CD4-positive, alpha-beta memory T cell (primary cell): ENCODE measurements at regions of chr1 and their contacts with region 1.

Region 1: DNA sequence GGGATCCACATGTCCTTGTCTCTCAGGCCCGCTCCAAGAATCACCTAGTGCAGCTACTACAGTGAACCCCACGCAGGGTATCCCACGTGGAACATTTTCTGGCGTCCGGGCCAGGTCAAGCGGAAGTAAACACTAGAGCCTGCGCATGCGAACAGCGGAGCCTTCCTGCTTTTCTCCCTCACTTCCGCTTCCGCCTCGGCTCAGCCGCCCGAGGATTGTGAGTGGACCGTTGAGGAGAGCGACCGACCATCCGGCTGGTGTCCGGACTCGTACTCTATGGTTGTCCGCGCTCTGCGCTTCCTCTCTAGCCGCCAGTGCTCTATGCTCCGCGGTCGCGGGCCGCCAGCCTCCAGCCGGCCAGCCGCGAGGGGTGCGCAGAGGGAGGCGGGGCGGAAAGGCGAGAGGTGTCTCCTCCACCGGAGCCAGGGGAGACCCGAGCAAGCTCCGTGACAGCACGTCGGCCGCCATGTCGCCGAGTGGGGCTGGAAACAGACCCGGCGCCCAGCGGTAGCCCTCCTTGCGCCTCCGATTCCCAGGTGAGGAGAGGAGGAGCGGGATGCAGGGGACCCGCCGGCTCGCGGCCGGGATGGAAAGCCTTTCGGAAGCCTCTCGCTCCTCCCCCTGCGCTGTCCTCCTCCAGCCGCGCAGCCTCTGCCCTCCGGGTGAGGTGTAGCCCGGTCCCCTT is at the starts of genes CNST and TFB2M:
- DNase-seq: peak; percentile 89 to 93 (median 91)
- H3K4me3 ChIP-seq: peak within 1 kb of the TSS; percentile 84 to 99
- H3K4me3 Mint-ChIP-seq: peak within 1 kb of the TSS; percentile 97 to 99 (median 98)
- H3K27ac ChIP-seq: peak within 1 kb of the TSS; percentile 92
- H3K27ac Mint-ChIP-seq: peak within 1 kb of the TSS; percentile 89 to 99 (median 97)
- H3K4me1 ChIP-seq: peaks cover 61% of the 10 kb centered on the region
- H3K4me1 Mint-ChIP-seq: peaks cover 29 to 68% (median 46%) of the 10 kb centered on the region in 4 donors
- H3K27me3 ChIP-seq: no peaks in the 10 kb centered on the region
- H3K27me3 Mint-ChIP-seq: no peaks in the 10 kb centered on the region
- total RNA-seq, gene CNST: 97.8 to 103 TPM
- total RNA-seq, gene TFB2M: 8.8 to 9.6 TPM

Region 2: DNA sequence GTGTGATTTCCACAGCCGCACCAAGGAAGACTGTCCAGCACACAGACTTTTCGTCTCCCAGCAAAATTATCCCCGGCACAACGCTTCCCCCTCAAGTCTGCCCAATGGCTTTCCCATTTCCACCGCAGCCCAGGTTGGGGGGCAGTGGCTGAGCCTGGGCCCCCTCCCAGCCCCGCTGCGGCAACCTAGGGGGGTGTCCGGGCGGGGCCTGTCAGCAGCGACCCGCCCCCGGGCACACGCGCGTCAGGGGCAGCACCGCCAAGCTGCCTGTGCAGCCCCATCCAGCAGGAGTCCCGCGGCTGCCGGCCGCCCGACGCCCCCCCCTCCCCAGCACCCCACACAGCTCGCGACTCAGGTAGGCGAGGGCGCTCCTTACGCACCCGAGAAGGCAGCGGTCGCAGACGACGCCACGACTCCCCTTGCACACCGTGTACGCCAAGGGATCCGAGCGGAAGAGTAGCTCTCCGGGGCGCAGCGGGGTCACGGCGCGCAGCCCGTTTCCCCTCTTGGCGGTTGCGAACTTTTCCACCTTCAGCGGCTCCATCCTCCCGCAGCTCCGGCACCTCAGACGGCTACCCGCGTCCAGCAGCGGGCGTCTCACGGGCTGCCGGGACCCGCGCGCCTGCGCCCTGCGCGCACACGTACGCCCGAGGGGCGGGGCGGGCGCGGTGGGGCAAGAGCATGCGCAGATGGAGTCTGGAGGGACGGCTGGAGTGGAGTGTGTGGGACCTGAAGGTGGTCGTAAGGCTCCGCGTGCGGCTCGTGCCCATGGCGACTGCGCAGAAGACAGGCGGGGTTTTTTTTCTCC is 59.4 kb before region 1 on chr1 and contains the start of gene SMYD3:
- CTCF ChIA-PET with region 1: no interaction called
- POLR2A ChIA-PET with region 1: interaction called, 16 read pairs
- intact Hi-C with region 1: loop called (anchors 1 kb)
- DNase-seq: peak; percentile 74 to 82 (median 77)
- H3K4me3 ChIP-seq: peak within 1 kb of the TSS; percentile 70 to 74
- H3K4me3 Mint-ChIP-seq: peak within 1 kb of the TSS; percentile 86 to 98 (median 95)
- H3K27ac ChIP-seq: peak within 1 kb of the TSS; percentile 48
- H3K27ac Mint-ChIP-seq: peak within 1 kb of the TSS; percentile 69 to 96 (median 93)
- H3K4me1 ChIP-seq: peaks cover 14% of the 10 kb centered on the region
- H3K4me1 Mint-ChIP-seq: peaks cover 20 to 40% (median 29%) of the 10 kb centered on the region in 4 donors
- H3K27me3 ChIP-seq: no peaks in the 10 kb centered on the region
- H3K27me3 Mint-ChIP-seq: no peaks in the 10 kb centered on the region
- total RNA-seq, gene SMYD3: 19.5 to 19.7 TPM

Region 3: GRCh38 chr1:246579818-246580217 is 13.5 kb after region 1 on chr1:
- CTCF ChIA-PET with region 1: interaction called, 3 read pairs
- POLR2A ChIA-PET with region 1: interaction called, 16 read pairs
- intact Hi-C with region 1: loop called (anchors 1 kb)
- DNase-seq: no peak
- H3K4me3 ChIP-seq: no peak overlapping the region
- H3K4me3 Mint-ChIP-seq: peak overlapping the region in 2 of 8 donors; percentile 4 to 16
- H3K27ac ChIP-seq: no peak overlapping the region
- H3K27ac Mint-ChIP-seq: peak overlapping the region in 2 of 7 donors; percentile 42 to 69
- H3K4me1 ChIP-seq: peaks cover 80% of the 10 kb centered on the region
- H3K4me1 Mint-ChIP-seq: peaks cover 51 to 90% (median 69%) of the 10 kb centered on the region in 4 donors
- H3K27me3 ChIP-seq: no peaks in the 10 kb centered on the region
- H3K27me3 Mint-ChIP-seq: no peaks in the 10 kb centered on the region

Region 4: DNA sequence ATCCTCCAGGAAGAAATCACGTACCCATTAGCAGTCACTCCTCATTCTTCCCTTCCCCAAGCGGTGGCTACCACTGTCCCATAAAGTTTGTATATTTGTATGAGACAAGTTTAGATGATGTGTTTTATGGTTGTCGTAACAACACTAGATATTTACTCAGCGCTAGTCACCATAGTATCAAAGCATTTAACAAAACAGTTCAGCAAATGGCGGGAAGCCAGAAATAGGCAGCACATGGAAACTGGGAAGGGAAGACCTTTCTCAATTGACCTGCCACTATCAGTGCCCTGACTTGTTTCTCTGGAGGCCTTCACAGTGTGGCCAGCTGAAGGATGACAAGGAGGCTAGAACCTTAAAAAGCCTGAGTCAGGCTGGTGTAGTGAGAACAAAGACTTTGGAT is 31.1 kb after region 1 on chr1:
- CTCF ChIA-PET with region 1: interaction called, 4 read pairs
- POLR2A ChIA-PET with region 1: interaction called, 19 read pairs
- intact Hi-C with region 1: loop called (anchors 1 kb)
- DNase-seq: no peak
- H3K4me3 ChIP-seq: no peak overlapping the region
- H3K4me3 Mint-ChIP-seq: no peak overlapping the region
- H3K27ac ChIP-seq: no peak overlapping the region
- H3K27ac Mint-ChIP-seq: peak overlapping the region in 3 of 7 donors; percentile 5 to 78 (median 7)
- H3K4me1 ChIP-seq: peaks cover 61% of the 10 kb centered on the region
- H3K4me1 Mint-ChIP-seq: peaks cover 49 to 89% (median 64%) of the 10 kb centered on the region in 4 donors
- H3K27me3 ChIP-seq: no peaks in the 10 kb centered on the region
- H3K27me3 Mint-ChIP-seq: no peaks in the 10 kb centered on the region

Region 5: DNA sequence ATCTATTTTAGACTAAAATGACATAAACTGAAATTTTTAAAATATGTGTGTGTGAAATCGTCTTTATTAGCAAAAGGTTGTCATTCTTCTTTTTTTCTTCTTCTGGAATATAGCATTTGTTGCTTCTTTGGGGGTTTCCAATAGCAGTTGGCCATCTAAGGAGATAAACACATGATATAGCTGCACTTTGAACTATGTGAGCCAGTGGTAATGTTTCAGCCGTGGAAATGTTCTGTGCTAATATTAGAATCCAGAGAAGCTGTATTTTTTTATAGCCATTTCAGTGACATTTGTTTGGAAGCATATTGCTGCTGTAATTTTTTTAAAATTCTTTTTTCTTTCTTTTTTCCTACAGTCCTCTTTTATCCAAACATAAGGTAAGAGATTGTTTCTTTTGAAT is 75.1 kb after region 1 on chr1:
- CTCF ChIA-PET with region 1: no interaction called
- POLR2A ChIA-PET with region 1: interaction called, 3 read pairs
- intact Hi-C with region 1: loop called (anchors 5 kb)
- DNase-seq: no peak
- H3K4me3 ChIP-seq: no peak overlapping the region
- H3K4me3 Mint-ChIP-seq: no peak overlapping the region
- H3K27ac ChIP-seq: no peak overlapping the region
- H3K27ac Mint-ChIP-seq: peak overlapping the region in 1 of 7 donors; percentile 15
- H3K4me1 ChIP-seq: peaks cover 10% of the 10 kb centered on the region
- H3K4me1 Mint-ChIP-seq: peaks cover 0 to 11% (median 7%) of the 10 kb centered on the region in 4 donors
- H3K27me3 ChIP-seq: no peaks in the 10 kb centered on the region
- H3K27me3 Mint-ChIP-seq: no peaks in the 10 kb centered on the region

Region 6: DNA sequence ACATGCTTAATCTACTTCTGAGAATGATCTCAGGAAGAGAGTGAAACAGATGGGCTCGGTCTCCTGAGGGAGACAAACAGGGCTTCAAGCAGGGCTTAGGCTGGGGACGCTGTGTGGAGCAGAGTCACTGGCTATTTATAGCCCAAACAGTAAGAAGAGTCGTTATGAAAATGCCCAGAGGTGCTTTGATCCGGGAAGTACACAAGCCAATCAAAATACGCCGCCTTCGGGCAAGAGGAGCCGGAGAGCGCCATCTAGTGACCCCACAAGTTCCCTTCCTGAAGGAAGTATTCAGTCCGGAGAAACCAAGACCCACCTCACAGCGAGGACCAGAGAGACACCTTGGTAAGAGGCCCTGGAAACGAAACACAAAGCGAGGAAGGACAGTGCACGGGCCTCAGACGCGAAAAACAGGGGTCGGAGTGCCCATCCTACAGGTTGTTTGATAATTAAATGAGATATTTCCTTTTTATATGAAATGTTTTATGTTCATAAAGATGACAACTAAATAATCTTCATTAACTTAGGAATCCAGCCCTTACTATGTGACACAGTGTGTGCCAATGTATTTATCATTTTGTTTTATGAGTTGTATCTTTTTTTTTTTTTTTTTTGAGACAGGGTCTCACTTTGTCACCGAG is 132.9 kb after region 1 on chr1:
- CTCF ChIA-PET with region 1: no interaction called
- POLR2A ChIA-PET with region 1: no interaction called
- intact Hi-C with region 1: loop called (anchors 2 kb)
- DNase-seq: peak; percentile 74 to 80 (median 77)
- H3K4me3 ChIP-seq: peak overlapping the region in 1 of 2 donors; percentile 4
- H3K4me3 Mint-ChIP-seq: peak overlapping the region; percentile 38 to 85 (median 74)
- H3K27ac ChIP-seq: no peak overlapping the region
- H3K27ac Mint-ChIP-seq: peak overlapping the region in 5 of 7 donors; percentile 11 to 53 (median 31)
- H3K4me1 ChIP-seq: peaks cover 10% of the 10 kb centered on the region
- H3K4me1 Mint-ChIP-seq: peaks cover 3 to 13% (median 6%) of the 10 kb centered on the region in 4 donors
- H3K27me3 ChIP-seq: no peaks in the 10 kb centered on the region
- H3K27me3 Mint-ChIP-seq: no peaks in the 10 kb centered on the region